ENCODE measurements at regions of chr3 and their contacts with region 1.

Region 1: GRCh38 chr3:58414538-58415197 is 19.0 kb downstream of the PDHB start:
- DNase-seq: peak in 1 of 2 donors; percentile 29
- ATAC-seq: peak; percentile 63 to 71
- H3K4me3 ChIP-seq: no peak overlapping the region
- H3K27ac ChIP-seq: no peak overlapping the region
- H3K4me1 ChIP-seq: no peaks in the 10 kb centered on the region
- H3K27me3 ChIP-seq: no peaks in the 10 kb centered on the region
- CTCF ChIP-seq: peak; percentile 73 to 82 (median 82)
- POLR2A ChIP-seq: no peak

Region 2: GRCh38 chr3:58177747-58178527 is 236.7 kb before region 1 on chr3:
- in situ Hi-C with region 1: loop called in 1 of 4 experiments (anchors 10 kb)
- intact Hi-C with region 1: loop called (anchors 5 kb)
- DNase-seq: peak; percentile 68 to 73
- ATAC-seq: peak; percentile 88 to 93
- H3K4me3 ChIP-seq: peak overlapping the region; percentile 54 to 62 (median 58)
- H3K27ac ChIP-seq: no peak overlapping the region
- H3K4me1 ChIP-seq: peaks cover 3 to 15% of the 10 kb centered on the region in 2 donors
- H3K27me3 ChIP-seq: no peaks in the 10 kb centered on the region
- CTCF ChIP-seq: peak; percentile 87 to 93 (median 88)
- POLR2A ChIP-seq: no peak

Region 3: DNA sequence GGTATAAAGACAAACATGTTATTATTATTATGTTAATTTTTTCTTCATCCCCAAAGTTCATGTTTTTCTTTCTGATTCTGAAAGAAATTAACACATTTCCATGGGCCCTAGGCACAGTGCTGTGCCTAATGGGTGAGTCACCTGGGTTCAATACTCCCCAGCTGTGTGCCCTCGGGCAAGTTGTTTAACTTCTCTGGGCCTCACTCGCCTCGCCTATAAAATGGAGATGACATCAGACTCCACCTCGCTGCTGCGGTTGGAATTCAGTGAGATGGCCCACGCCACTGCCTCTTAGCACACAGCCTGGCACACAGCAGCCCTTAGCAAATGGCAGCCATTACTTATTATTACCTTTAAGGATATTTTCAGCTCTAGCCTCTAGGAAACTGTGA is 226.5 kb before region 1 on chr3:
- in situ Hi-C with region 1: loop called in 1 of 4 experiments (anchors 10 kb)
- intact Hi-C with region 1: no loop called
- DNase-seq: no peak
- ATAC-seq: no peak
- H3K4me3 ChIP-seq: no peak overlapping the region
- H3K27ac ChIP-seq: peak overlapping the region in 3 of 4 donors; percentile 38 to 62 (median 60)
- H3K4me1 ChIP-seq: peaks cover 2 to 12% of the 10 kb centered on the region in 2 donors
- H3K27me3 ChIP-seq: no peaks in the 10 kb centered on the region
- CTCF ChIP-seq: no peak
- POLR2A ChIP-seq: no peak

Region 4: GRCh38 chr3:58217209-58217811 is 197.4 kb before region 1 on chr3:
- in situ Hi-C with region 1: no loop called
- intact Hi-C with region 1: no loop called
- DNase-seq: peak; percentile 40 to 46
- ATAC-seq: peak; percentile 83 to 84
- H3K4me3 ChIP-seq: no peak overlapping the region
- H3K27ac ChIP-seq: peak overlapping the region in 3 of 4 donors; percentile 14 to 47 (median 30)
- H3K4me1 ChIP-seq: peaks cover 5 to 10% of the 10 kb centered on the region in 2 donors
- H3K27me3 ChIP-seq: no peaks in the 10 kb centered on the region
- CTCF ChIP-seq: peak; percentile 42 to 71 (median 63)
- POLR2A ChIP-seq: no peak

Region 5: GRCh38 chr3:58266577-58266976 is 148.1 kb before region 1 on chr3:
- in situ Hi-C with region 1: no loop called
- intact Hi-C with region 1: no loop called
- DNase-seq: no peak
- ATAC-seq: no peak
- H3K4me3 ChIP-seq: no peak overlapping the region
- H3K27ac ChIP-seq: no peak overlapping the region
- H3K4me1 ChIP-seq: no peaks in the 10 kb centered on the region
- H3K27me3 ChIP-seq: no peaks in the 10 kb centered on the region
- CTCF ChIP-seq: no peak
- POLR2A ChIP-seq: no peak

Region 6: GRCh38 chr3:58324391-58325390 is 90.0 kb before region 1 on chr3:
- in situ Hi-C with region 1: loop called (anchors 5 to 10 kb)
- intact Hi-C with region 1: no loop called
- DNase-seq: no peak
- ATAC-seq: no peak
- H3K4me3 ChIP-seq: no peak overlapping the region
- H3K27ac ChIP-seq: peak overlapping the region in 2 of 4 donors; percentile 19 to 35
- H3K4me1 ChIP-seq: peaks cover 0 to 2% of the 10 kb centered on the region in 2 donors
- H3K27me3 ChIP-seq: no peaks in the 10 kb centered on the region
- CTCF ChIP-seq: no peak
- POLR2A ChIP-seq: no peak

Region 7: DNA sequence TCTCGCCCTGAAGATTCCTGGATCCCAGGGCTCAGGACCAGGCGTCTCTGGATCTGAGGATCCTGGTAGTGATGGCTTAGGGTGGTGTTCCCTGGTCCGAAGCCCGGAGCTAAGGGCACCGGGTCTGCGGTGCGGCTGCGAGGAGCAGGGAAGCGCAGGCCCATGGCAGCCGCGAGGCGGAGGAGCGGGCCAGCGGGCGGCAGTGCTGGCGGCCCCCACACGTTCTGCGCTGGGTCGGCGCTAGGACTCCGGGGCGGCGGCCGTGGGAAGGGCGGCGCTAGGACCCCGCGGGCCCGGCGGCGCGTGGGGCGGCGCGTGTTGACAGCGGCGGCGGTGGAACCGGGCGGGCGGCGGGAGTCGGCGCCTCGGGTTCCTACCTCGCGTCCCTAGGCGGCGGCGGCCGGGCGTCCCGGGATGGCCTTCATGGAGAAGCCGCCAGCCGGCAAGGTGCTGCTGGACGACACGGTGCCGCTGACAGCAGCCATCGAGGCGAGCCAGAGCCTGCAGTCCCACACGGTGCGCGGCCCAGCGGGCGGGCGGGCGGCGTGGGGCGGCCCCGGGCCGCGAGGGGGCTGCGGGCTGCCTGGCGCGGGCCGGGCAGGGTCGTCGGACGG is 82.0 kb before region 1 on chr3 and contains the start of gene PXK:
- in situ Hi-C with region 1: loop called in 2 of 4 experiments (anchors 5 to 10 kb)
- intact Hi-C with region 1: loop called (anchors 1 kb)
- DNase-seq: peak; percentile 55 to 74
- ATAC-seq: peak; percentile 84 to 87
- H3K4me3 ChIP-seq: peak within 1 kb of the TSS; percentile 84 to 92 (median 85)
- H3K27ac ChIP-seq: peak within 1 kb of the TSS; percentile 72 to 78 (median 76)
- H3K4me1 ChIP-seq: peaks cover 27 to 30% of the 10 kb centered on the region in 2 donors
- H3K27me3 ChIP-seq: no peaks in the 10 kb centered on the region
- CTCF ChIP-seq: peak in 3 of 5 experiments; percentile 25 to 54 (median 48)
- POLR2A ChIP-seq: peak; percentile 62 to 69
- total RNA-seq, gene PXK: 21.6 to 33.6 (median 24.4) TPM

Region 8: GRCh38 chr3:58848826-58849225 is 434.2 kb after region 1 on chr3:
- in situ Hi-C with region 1: no loop called
- intact Hi-C with region 1: no loop called
- DNase-seq: no peak
- ATAC-seq: no peak
- H3K4me3 ChIP-seq: no peak overlapping the region
- H3K27ac ChIP-seq: no peak overlapping the region
- H3K4me1 ChIP-seq: no peaks in the 10 kb centered on the region
- H3K27me3 ChIP-seq: no peaks in the 10 kb centered on the region
- CTCF ChIP-seq: no peak
- POLR2A ChIP-seq: no peak

Region 9: GRCh38 chr3:59968513-59969045 is 1553.9 kb after region 1 on chr3:
- in situ Hi-C with region 1: no loop called
- intact Hi-C with region 1: no loop called
- DNase-seq: no peak
- ATAC-seq: no peak
- H3K4me3 ChIP-seq: no peak overlapping the region
- H3K27ac ChIP-seq: no peak overlapping the region
- H3K4me1 ChIP-seq: no peaks in the 10 kb centered on the region
- H3K27me3 ChIP-seq: no peaks in the 10 kb centered on the region
- CTCF ChIP-seq: no peak
- POLR2A ChIP-seq: no peak

Measured in gastrocnemius medialis (tissue), 4 donors.